Breast epithelium (tissue), 4 donors: ENCODE measurements at regions of chr2 and their contacts with region 1.

Region 1: GRCh38 chr2:182404092-182404491 is 22.7 kb downstream of the PDE1A start:
- DNase-seq: no peak
- H3K4me3 ChIP-seq: no peak overlapping the region
- H3K27ac ChIP-seq: no peak overlapping the region
- H3K4me1 ChIP-seq: no peaks in the 10 kb centered on the region
- H3K27me3 ChIP-seq: no peaks in the 10 kb centered on the region
- CTCF ChIP-seq: no peak
- POLR2A ChIP-seq: no peak

Region 2: DNA sequence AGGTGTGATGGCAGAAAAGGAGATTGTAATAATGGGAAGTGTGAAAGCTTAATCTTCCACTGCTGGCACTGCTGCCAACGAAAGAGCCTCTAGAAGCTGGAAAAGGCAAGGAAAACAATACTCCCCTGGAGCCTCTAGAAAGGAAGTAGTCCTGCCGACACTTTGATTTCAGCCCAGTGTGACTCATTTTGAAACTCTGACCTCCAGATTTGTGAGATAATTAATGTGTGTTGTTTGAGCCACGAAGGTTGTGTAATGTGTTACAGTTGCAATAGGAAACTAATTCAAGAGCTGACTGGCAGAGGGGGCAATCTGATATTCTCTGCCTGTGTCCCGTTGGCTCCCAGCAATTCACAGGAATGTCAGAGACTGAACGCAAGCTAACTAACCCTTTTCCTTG is 1642.9 kb before region 1 on chr2:
- intact Hi-C with region 1: loop called (anchors 10 kb)
- DNase-seq: no peak
- H3K4me3 ChIP-seq: no peak overlapping the region
- H3K27ac ChIP-seq: no peak overlapping the region
- H3K4me1 ChIP-seq: no peaks in the 10 kb centered on the region
- H3K27me3 ChIP-seq: no peaks in the 10 kb centered on the region
- CTCF ChIP-seq: no peak
- POLR2A ChIP-seq: no peak